Activated T-helper 2 cell treated with anti-CD3 and anti-CD28 coated beads, Interferon-gamma antibody, Interleukin-2, Interleukin-4, amounts not matched to agents 10 μg/mL and 5 μg/mL and 100 μg/mL, durations not matched to agents 14 hours and 24 hours and 36 hours (primary cell): ENCODE measurements at regions of chr16 and their contacts with region 1.

Region 1: DNA sequence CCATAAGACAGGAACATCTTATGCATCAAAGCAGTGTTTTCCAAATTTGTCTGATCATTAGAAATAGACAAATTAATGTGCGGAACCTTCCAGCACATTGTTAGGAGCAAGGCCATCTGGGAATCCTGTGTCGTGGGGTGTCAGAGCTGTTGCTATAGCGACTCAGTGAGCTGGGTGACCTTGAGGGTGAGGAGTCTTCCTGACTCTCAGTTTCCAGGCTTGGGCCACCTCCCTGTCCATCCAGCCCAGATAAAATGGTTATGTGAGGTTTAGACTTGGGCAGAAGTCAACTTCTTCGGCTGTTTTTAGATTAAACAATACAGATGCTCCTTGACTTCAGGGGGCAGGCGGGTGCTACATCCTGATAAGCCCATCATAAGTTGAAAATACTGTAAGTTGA is 20.6 kb downstream of the MT1X start:
- DNase-seq: no peak
- H3K4me3 Mint-ChIP-seq: no peak overlapping the region
- H3K27ac Mint-ChIP-seq: no peak overlapping the region
- H3K4me1 Mint-ChIP-seq: peaks cover 12% of the 10 kb centered on the region
- H3K27me3 Mint-ChIP-seq: no peaks in the 10 kb centered on the region

Region 2: GRCh38 chr16:56513972-56514371 is 188.9 kb before region 1 on chr16:
- intact Hi-C with region 1: loop called (anchors 2 kb)
- DNase-seq: no peak
- H3K4me3 Mint-ChIP-seq: no peak overlapping the region
- H3K27ac Mint-ChIP-seq: no peak overlapping the region
- H3K4me1 Mint-ChIP-seq: no peaks in the 10 kb centered on the region
- H3K27me3 Mint-ChIP-seq: no peaks in the 10 kb centered on the region

Region 3: GRCh38 chr16:56576585-56577293 is 126.1 kb before region 1 on chr16:
- intact Hi-C with region 1: loop called (anchors 1 kb)
- DNase-seq: peak; percentile 80
- H3K4me3 Mint-ChIP-seq: no peak overlapping the region
- H3K27ac Mint-ChIP-seq: no peak overlapping the region
- H3K4me1 Mint-ChIP-seq: peaks cover 8% of the 10 kb centered on the region
- H3K27me3 Mint-ChIP-seq: peaks cover 13% of the 10 kb centered on the region

Region 4: GRCh38 chr16:56594292-56594619 is 108.6 kb before region 1 on chr16:
- intact Hi-C with region 1: no loop called
- DNase-seq: no peak
- H3K4me3 Mint-ChIP-seq: no peak overlapping the region
- H3K27ac Mint-ChIP-seq: no peak overlapping the region
- H3K4me1 Mint-ChIP-seq: peaks cover 14% of the 10 kb centered on the region
- H3K27me3 Mint-ChIP-seq: peaks cover 27% of the 10 kb centered on the region

Region 5: DNA sequence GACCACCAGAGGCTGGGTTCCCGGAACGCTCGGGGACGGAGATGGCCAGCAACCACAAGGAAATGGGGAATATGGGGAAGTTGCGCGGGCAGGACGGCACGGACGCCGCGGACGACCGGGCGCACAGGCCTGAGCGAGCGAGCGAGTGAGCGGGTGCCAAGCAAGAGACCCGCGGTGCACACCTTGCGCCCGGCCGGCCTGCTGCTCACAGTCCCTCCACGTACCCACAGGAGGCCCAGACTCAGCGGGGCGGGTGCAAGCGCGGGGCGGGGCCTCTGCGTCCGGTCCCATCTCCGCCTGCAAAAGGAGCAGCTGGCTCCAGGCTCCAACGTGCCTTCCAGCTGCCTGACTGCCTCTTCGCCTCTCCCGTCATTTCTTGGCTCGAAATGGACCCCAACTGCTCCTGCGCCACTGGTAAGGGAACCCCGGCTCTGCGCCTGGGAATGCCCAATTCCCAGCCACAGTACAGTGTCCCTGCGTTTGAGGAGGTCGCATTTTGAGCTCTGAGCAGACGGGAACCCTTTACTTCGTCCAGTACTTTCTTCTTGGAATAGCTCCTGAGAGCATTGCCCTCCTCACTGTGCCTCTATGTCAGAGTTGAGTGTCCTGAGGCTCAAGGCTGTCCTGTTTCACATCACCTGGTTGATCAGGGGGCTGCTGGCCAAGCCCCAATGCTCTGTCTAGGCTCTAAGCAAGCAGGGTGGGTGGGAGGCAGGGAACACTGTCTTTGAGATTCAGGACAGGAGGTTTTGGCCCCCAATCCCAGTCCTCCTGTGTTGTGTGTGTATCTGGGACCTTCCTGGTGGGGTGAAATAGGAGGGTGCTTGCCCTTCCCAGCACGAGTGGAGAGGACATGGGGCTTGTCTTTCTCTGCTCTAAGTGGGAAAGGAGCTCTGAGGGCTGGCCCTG is 85.4 kb before region 1 on chr16:
- intact Hi-C with region 1: no loop called
- DNase-seq: peak; percentile 64
- H3K4me3 Mint-ChIP-seq: peak overlapping the region; percentile 87
- H3K27ac Mint-ChIP-seq: peak overlapping the region; percentile 68
- H3K4me1 Mint-ChIP-seq: peaks cover 49% of the 10 kb centered on the region
- H3K27me3 Mint-ChIP-seq: no peaks in the 10 kb centered on the region

Region 6: DNA sequence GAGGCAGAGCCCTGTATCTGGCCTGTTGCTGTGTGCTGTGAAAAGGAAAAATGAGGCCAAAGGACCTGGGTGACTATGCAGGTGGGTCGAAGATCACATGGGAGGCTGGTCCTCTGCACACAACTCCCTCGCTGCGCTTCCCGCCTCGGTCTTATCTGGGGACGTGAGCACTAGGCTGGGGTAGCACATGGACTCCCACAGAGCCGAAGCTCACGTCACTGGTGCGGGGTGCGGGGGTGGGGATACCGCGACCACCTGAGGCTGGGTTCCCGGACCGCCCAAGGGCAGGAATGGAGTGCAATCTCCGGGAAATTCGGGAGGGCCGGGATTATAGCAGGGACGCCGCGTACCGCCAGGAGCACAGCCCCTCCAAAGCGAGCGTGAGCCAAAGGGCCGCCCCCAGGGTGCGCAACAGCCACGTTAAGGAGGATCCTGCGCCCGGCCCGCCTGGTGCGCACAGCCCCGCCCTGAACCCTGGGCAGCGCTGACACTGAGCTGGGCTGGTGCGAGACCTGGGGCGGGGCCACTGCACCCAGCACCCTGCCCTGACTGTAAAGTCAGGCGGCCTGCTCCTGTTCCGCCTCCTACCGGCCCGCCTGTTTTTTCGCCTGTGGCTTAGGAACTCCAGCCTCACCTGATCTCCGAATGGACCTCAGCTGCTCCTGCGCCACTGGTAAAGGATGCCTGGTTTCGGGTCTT is 59.6 kb before region 1 on chr16:
- intact Hi-C with region 1: loop called (anchors 1 kb)
- DNase-seq: peak; percentile 76
- H3K4me3 Mint-ChIP-seq: peak overlapping the region; percentile 70
- H3K27ac Mint-ChIP-seq: peak overlapping the region; percentile 60
- H3K4me1 Mint-ChIP-seq: peaks cover 23% of the 10 kb centered on the region
- H3K27me3 Mint-ChIP-seq: peaks cover 48% of the 10 kb centered on the region

Region 7: GRCh38 chr16:56673921-56674320 is 28.9 kb before region 1 on chr16:
- intact Hi-C with region 1: loop called (anchors 2 kb)
- DNase-seq: no peak
- H3K4me3 Mint-ChIP-seq: no peak overlapping the region
- H3K27ac Mint-ChIP-seq: no peak overlapping the region
- H3K4me1 Mint-ChIP-seq: peaks cover 35% of the 10 kb centered on the region
- H3K27me3 Mint-ChIP-seq: peaks cover 34% of the 10 kb centered on the region

Region 8: GRCh38 chr16:56681939-56682702 is 20.7 kb before region 1 on chr16 and contains the start of gene MT1X:
- intact Hi-C with region 1: loop called (anchors 2 kb)
- DNase-seq: peak; percentile 83
- H3K4me3 Mint-ChIP-seq: peak within 1 kb of the TSS; percentile 94
- H3K27ac Mint-ChIP-seq: peak within 1 kb of the TSS; percentile 84
- H3K4me1 Mint-ChIP-seq: peaks cover 24% of the 10 kb centered on the region
- H3K27me3 Mint-ChIP-seq: no peaks in the 10 kb centered on the region
- total RNA-seq, gene MT1X: 58.2 and 62.3 TPM in 2 replicates

Region 9: DNA sequence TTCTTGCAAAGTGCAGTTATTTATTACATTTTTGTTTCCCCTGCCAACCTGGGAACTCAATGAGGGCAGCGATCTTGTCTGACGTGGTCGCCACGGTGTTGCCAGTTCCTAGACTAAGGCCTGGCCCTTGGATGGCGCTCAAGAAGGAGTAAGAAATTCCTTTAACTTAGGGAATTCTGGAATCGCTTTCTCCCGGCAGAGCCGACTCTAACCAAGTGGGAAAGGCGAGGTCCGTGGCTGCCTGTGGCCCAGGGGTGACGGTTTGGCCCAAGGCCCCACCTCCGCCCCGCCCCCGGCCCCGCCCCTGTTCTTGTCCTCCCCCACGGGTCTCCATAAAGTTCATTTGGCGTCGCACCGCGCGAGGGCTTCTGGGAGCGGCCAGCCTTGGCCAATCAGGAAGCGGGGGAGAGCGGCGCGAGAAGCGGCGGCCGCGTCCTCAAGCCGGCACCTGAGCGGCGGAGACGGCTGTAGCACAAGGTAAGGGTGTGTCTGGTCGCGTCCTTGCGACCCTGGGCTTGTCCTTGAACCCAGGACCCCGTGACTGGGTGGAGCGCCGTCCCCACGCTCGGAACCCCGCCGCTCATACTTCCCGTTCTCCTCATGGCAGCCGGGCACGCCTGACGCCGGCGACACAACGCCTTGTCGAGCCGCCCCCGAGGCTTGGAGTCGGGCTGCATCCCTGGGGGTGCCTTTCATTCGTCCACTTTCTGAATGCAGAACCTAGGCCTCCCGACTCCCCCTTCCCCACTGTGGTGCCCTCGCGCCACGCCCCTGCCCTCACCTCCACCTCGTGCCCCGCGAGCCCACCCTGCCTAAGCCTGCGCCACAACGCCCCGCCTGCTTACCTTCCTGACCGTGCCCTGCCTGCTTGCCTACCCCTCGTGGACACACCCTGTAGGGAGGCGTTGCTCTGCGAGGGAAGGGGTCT is 27.2 kb after region 1 on chr16 and contains the start of gene NUP93:
- intact Hi-C with region 1: loop called (anchors 2 kb)
- DNase-seq: peak; percentile 88
- H3K4me3 Mint-ChIP-seq: no peak within 1 kb of the TSS
- H3K27ac Mint-ChIP-seq: peak within 1 kb of the TSS; percentile 83
- H3K4me1 Mint-ChIP-seq: peaks cover 17% of the 10 kb centered on the region
- H3K27me3 Mint-ChIP-seq: no peaks in the 10 kb centered on the region
- total RNA-seq, gene NUP93: 145 and 149 TPM in 2 replicates

Region 10: DNA sequence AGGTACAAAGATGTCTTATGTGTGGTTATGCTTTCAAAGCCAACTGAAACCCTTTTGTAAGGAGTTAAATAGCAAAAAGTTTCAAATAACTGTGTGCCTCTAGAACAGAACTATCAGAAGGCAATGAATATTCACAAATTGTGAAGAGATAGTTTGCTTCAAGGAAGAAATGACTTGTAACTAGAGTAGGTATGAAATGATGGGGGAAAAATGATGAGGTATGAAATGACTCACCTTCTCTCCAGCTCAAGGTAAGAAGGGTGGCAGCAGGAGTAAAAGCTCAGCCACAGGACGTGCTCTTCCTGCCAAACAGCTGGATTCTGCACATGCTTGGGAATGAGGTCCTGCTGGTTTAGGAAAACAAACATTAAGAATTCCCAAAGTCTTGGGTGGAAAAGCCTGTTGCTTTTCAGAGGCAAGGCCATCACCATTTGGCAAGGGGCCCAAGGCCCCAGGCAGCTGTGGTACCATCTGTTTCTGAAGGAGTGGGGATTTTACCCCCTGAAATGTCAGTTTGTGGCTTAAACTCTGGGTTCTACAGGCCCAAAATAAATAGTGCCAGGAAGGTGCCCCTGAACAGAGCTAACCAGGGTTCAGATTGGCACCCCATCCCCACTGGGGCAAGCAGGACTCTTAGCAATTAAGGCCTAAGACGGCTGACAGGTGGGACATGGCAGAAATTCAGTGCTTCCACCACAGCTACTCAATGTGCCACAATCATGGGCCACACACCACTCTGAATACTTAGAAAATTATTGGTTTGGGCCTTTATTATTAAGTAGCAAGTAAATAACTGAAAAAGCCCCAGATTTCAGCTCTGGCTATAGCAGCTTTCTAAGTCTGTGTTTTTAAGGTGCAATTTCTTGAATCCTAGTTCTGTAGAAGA is 242.4 kb after region 1 on chr16:
- intact Hi-C with region 1: no loop called
- DNase-seq: no peak
- H3K4me3 Mint-ChIP-seq: no peak overlapping the region
- H3K27ac Mint-ChIP-seq: peak overlapping the region; percentile 87
- H3K4me1 Mint-ChIP-seq: peaks cover 36% of the 10 kb centered on the region
- H3K27me3 Mint-ChIP-seq: no peaks in the 10 kb centered on the region